Panc1 (cell line): ENCODE measurements at regions of chr1 and their contacts with region 1.

Region 1: DNA sequence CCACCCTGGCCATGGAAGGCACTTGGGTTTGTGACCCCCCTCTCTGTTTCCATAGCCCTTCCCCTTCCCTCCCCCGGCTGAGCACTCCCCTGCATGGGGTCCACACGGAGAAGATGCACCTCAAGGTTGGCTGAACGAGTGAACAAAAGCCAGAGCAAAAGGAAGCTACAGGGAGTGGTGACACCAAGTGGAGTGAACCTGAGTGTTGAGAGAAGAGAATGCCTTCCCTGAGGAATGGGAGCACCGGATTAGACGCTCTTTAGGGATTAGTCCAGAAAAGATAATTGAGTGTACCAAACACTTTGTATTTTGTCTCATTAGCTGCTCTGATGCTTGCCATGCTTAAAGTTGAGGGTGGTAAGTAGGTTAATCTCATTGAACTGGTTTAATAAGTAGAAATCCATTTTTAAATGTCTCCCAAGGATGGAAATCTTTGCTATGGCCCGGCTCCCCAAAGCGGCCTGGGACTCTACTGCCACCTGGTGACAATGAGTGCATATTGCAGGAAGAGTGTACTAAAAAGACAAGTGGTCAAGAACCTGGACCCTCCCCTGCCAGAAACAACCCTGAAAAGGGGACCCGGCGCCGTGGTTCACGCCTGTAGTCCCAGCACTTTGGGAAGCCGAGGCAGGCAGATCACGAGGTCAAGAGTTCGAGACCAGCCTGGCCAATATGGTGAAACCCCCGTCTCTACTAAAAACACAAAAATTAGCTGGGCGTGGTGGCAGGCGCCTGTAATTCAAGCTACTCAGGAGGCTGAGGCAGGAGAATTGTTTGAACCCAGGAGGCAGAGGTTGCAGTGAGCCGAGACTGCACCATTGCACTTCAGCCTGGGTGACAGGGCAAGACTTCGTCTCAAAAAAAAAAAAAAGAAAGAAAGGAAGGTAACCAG is 150.6 kb upstream of the ZC3H12A start:
- DNase-seq: peak; percentile 27
- ATAC-seq: no peak
- H3K4me3 ChIP-seq: no peak overlapping the region
- H3K27ac ChIP-seq: no peak overlapping the region
- H3K4me1 ChIP-seq: no peaks in the 10 kb centered on the region
- H3K27me3 ChIP-seq: peaks cover 11% of the 10 kb centered on the region; the same call in 1 of the 2 replicates
- CTCF ChIP-seq: peak; percentile 95

Region 2: DNA sequence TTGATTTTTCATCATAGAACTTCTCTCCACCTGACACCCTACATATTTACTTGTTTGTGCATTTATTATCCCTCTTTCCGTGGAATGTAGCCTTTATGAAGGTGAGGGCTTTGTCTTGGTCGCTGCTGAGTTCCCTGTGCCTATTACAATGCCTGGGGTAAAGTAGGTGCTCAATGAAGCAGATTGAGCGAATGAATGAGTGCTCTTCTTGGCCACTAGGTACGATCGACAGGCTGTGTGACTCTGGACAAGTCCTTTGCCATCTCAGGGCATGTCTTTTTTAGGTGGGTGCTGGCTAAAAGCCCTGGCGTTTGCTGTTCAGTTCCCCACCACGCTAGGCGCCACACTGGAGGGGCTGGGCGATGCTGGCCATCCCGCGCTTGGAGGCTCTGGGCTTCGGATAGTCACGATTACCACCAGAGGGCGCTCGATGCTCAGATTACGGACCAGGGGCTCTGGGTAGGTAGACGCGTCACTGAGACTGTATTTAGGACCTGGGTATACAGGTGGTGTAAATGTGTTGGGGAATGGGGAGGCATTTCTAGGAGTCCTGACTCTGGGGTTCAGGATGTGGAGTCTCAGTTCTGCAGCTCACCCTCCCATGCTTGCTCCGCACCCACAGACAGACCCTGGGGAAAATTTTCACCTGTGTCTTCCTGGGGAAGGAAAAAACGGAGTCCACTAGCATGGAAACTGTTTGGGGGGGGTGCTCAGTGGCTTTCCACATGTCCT is 770.0 kb before region 1 on chr1:
- CTCF ChIA-PET with region 1: no interaction called
- POLR2A ChIA-PET with region 1: no interaction called
- in situ Hi-C with region 1: no loop called
- intact Hi-C with region 1: loop called (anchors 10 kb)
- DNase-seq: no peak
- ATAC-seq: peak; percentile 97
- H3K4me3 ChIP-seq: no peak overlapping the region
- H3K27ac ChIP-seq: no peak overlapping the region
- H3K4me1 ChIP-seq: no peaks in the 10 kb centered on the region
- H3K27me3 ChIP-seq: peaks cover 22% of the 10 kb centered on the region
- CTCF ChIP-seq: peak; percentile 90

Region 3: GRCh38 chr1:36703526-36704208 is 620.1 kb before region 1 on chr1:
- CTCF ChIA-PET with region 1: no interaction called
- POLR2A ChIA-PET with region 1: no interaction called
- in situ Hi-C with region 1: no loop called
- intact Hi-C with region 1: loop called (anchors 5 kb)
- DNase-seq: peak; percentile 53
- ATAC-seq: peak; percentile 93
- H3K4me3 ChIP-seq: no peak overlapping the region
- H3K27ac ChIP-seq: no peak overlapping the region
- H3K4me1 ChIP-seq: peaks cover 5% of the 10 kb centered on the region; the same call in 1 of the 2 replicates
- H3K27me3 ChIP-seq: peaks cover 17% of the 10 kb centered on the region; the same call in 1 of the 2 replicates
- CTCF ChIP-seq: peak; percentile 97

Region 4: DNA sequence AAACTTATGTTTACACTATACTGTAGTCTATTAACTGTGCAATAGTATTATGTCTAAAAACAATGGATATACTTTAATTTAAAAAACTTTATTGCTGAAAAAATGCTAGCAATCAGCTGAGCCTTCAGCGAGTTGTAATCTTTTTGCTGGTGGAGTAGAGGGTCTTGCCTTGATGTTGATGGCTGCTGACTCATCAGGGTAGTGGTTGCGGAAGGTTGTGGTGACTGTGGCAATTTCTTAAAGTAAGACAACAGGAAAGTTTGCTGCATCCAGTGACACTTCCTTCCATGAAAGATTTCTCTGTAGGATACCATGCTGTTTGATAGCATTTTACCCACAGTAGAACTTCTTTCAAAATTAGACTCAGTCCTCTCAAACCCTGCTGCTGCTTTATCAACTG is 606.3 kb before region 1 on chr1:
- CTCF ChIA-PET with region 1: interaction called, 10 read pairs
- POLR2A ChIA-PET with region 1: no interaction called
- in situ Hi-C with region 1: no loop called
- intact Hi-C with region 1: no loop called
- DNase-seq: no peak
- ATAC-seq: no peak
- H3K4me3 ChIP-seq: no peak overlapping the region
- H3K27ac ChIP-seq: no peak overlapping the region
- H3K4me1 ChIP-seq: no peaks in the 10 kb centered on the region
- H3K27me3 ChIP-seq: peaks cover 23% of the 10 kb centered on the region
- CTCF ChIP-seq: no peak

Region 5: DNA sequence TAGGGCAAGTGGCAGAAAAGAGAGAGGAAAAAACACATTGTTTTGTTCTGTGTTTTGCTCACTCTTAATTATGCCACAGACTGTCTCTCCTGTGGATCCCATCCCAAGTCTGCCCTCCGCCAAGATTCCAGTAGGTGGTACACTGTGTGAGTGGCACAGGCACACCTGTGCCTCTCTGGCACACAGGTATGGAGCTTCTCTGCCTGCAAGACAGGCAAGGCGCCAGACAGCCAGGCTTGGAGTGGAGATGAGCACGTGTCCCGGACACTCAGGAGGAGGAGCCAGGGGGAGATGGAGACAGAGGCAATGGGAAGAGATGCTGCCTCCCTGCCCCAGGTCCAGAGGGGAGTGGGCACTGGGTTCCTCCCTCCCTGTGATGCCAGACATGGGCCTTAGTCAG is 283.0 kb before region 1 on chr1:
- CTCF ChIA-PET with region 1: no interaction called
- POLR2A ChIA-PET with region 1: no interaction called
- in situ Hi-C with region 1: no loop called
- intact Hi-C with region 1: loop called (anchors 10 kb)
- DNase-seq: no peak
- ATAC-seq: no peak
- H3K4me3 ChIP-seq: no peak overlapping the region
- H3K27ac ChIP-seq: no peak overlapping the region
- H3K4me1 ChIP-seq: no peaks in the 10 kb centered on the region
- H3K27me3 ChIP-seq: peaks cover 2% of the 10 kb centered on the region; the same call in 1 of the 2 replicates
- CTCF ChIP-seq: no peak

Region 6: DNA sequence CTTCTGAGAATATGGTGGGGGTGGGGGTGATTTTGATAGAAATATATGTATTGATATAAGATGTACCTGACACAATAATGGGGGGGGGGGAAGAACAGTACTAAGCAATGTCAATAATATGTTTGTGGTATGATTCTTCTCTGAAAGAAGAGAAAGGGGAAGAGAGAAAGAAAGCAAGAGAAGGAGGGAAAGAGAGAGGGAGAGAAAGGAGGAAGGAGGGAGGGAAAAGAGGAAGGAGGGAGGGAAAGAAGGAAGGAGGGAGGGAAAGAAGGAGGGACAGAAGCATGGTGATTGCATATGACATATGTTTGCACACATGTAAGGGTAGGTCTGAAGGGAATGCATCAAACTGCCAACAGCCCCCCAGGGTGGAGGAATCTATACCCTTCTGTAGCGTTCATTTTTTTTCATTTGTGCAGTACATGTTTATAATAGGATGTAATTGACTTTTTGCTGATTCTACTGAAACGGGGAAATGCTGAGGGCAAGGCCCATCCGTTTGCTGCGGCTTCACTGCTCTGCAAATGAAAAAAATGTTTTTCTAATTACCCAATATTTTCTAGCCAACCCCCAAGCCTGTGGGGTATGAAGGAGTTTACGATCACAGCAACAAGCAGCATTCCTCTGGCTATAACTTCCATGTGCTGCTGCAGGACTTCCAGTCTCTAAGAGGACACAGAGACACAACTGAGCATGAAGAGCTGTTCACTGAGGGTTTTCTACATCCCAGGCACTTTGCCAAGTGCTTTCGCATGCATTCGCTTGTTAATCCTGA is 31.3 kb after region 1 on chr1:
- CTCF ChIA-PET with region 1: no interaction called
- POLR2A ChIA-PET with region 1: no interaction called
- in situ Hi-C with region 1: no loop called
- intact Hi-C with region 1: no loop called
- DNase-seq: no peak
- ATAC-seq: no peak
- H3K4me3 ChIP-seq: no peak overlapping the region
- H3K27ac ChIP-seq: no peak overlapping the region
- H3K4me1 ChIP-seq: no peaks in the 10 kb centered on the region
- H3K27me3 ChIP-seq: peaks cover 12% of the 10 kb centered on the region
- CTCF ChIP-seq: no peak

Region 7: GRCh38 chr1:37423810-37424209 is 100.1 kb after region 1 on chr1:
- CTCF ChIA-PET with region 1: no interaction called
- POLR2A ChIA-PET with region 1: interaction called, 10 read pairs
- in situ Hi-C with region 1: no loop called
- intact Hi-C with region 1: no loop called
- DNase-seq: no peak
- ATAC-seq: no peak
- H3K4me3 ChIP-seq: no peak overlapping the region
- H3K27ac ChIP-seq: no peak overlapping the region
- H3K4me1 ChIP-seq: no peaks in the 10 kb centered on the region
- H3K27me3 ChIP-seq: peaks cover 11% of the 10 kb centered on the region
- CTCF ChIP-seq: no peak

Region 8: DNA sequence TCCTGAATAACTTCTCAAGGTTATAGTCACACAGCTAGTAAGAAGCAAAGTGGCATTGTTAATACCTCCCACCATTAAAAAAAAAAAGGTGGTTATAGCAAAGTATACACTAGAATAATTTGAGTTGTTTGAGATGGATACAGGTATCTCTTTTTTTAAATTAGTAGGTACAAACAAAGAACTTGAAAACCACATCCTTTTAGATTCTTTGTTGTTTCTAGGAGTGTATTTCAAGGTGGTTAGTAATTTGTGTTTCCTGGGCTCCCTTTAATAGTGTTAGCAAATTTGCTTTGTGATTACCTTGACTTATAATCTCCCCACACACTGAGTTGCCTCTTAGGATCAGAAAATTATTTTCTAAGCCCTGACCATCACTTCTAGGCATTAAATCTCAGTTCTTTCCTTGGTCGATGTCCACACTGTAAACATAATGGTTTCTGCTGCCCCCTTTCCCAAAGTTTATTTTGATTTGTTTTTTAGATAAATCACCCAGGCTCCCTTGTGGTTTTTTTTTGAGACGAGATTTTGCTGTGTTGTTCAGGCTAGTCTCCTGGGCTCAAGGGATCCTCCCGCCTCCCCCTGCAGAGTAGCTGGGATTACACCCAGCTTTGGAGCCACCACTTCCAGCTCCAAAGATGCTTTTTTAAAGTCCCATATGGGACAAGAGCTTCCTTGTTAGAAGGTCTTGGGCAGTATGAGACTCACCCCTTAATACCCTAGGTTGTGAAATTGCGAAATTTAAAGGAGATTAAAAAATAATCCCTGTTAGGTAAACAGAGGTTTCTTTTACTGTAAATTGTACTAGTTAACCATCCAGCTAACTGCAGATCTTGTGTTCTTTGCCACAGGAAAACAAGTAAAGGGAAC is 1673.5 kb after region 1 on chr1:
- CTCF ChIA-PET with region 1: no interaction called
- POLR2A ChIA-PET with region 1: no interaction called
- in situ Hi-C with region 1: no loop called
- intact Hi-C with region 1: no loop called
- DNase-seq: no peak
- ATAC-seq: no peak; the same call in 1 of the 2 replicates
- H3K4me3 ChIP-seq: no peak overlapping the region
- H3K27ac ChIP-seq: no peak overlapping the region
- H3K4me1 ChIP-seq: peaks cover 11% of the 10 kb centered on the region
- H3K27me3 ChIP-seq: no peaks in the 10 kb centered on the region
- CTCF ChIP-seq: no peak